Heart right ventricle (tissue), 16 donors: ENCODE measurements at regions of chr4 and their contacts with region 1.

Region 1: DNA sequence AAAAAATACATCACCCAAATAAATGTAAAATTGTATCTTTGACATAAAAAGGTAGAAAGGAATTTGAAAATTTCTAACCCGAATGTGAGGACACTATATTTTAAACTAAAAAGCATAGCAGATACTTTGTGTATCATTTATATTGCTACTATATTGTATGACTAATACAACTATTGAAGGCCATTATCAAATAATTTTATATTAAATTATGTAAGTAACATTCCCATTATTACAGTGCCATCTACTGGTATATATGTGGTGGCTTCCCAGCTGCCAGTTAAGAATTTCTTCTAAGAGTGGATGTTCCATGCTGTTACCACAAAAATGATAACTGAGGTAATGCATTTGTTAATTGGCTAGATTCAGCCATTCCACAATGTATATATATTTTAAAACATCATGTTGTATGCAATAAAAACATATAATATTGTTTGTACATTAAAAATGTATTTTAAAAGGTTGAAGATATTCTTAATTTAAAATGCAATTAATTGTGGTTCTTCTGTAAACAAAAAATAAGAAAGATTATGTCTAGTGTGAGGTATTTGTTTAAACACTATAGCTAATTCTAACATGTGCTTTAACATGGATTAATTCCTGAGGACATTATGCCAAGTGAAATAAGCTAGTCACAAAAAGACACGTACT is 65.3 kb downstream of the EGF start:
- DNase-seq: no peak
- ATAC-seq: no peak
- H3K4me3 ChIP-seq: no peak overlapping the region
- H3K27ac ChIP-seq: no peak overlapping the region
- H3K4me1 ChIP-seq: peaks cover 0 to 8% (median 0%) of the 10 kb centered on the region in 9 donors
- H3K27me3 ChIP-seq: peaks cover 0 to 4% (median 0%) of the 10 kb centered on the region in 7 donors
- CTCF ChIP-seq: peak; percentile 29 to 81 (median 72)

Region 2: GRCh38 chr4:108650212-108651013 is 1327.6 kb before region 1 on chr4 and contains the start of gene OSTC:
- intact Hi-C with region 1: loop called in 1 of 10 experiments (anchors 10 kb)
- DNase-seq: peak; percentile 94 to 97
- ATAC-seq: peak; percentile 96 to 99 (median 98)
- H3K4me3 ChIP-seq: peak within 1 kb of the TSS; percentile 67 to 94 (median 79)
- H3K27ac ChIP-seq: peak within 1 kb of the TSS; percentile 51 to 93 (median 86)
- H3K4me1 ChIP-seq: peaks cover 0 to 31% (median 19%) of the 10 kb centered on the region in 9 donors
- H3K27me3 ChIP-seq: no peaks in the 10 kb centered on the region
- CTCF ChIP-seq: peak in 5 of 9 donors; percentile 35 to 60 (median 46)
- total RNA-seq, gene OSTC: 21.8 to 47.7 (median 25.8) TPM

Region 3: DNA sequence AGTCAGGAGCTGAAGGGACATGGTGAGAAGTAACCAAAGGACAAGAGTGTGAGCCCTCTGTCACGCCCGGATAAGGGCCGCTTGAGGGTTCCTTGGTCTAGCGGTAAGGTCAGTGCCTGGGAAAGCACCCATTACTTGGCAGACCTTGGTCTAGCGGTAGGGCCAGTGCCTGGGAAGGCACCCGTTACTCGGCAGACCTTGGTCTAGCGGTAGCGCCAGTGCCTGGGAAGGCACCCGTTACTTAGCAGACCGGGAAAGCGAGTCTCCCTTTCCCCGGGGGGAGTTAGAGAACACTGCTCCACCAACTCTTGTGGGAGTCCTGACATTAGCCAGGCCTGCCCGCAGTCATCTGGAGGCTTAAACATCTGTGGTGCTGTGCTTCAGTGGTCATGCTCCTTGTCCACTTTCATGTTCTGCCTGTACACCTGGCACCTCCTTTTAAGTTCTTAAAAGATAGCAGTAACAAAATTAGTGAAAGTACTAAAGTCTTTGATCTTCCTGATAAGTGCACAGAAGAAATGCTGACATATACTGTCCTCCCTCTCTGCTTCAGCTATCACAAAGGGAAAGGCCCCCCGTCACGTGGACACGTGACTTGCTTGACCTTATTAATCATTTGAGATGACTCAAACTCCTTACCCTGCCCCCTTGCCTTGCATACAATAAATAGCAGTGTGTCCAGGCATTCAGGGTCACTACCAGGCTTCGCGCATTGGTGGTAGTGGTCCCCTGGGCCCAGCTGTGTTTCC is 553.7 kb before region 1 on chr4:
- intact Hi-C with region 1: loop called (anchors 1 to 10 kb)
- DNase-seq: no peak
- ATAC-seq: no peak
- H3K4me3 ChIP-seq: no peak overlapping the region
- H3K27ac ChIP-seq: no peak overlapping the region
- H3K4me1 ChIP-seq: peaks cover 0 to 7% (median 0%) of the 10 kb centered on the region in 9 donors
- H3K27me3 ChIP-seq: no peaks in the 10 kb centered on the region
- CTCF ChIP-seq: no peak

Region 4: GRCh38 chr4:109702950-109703663 is 274.9 kb before region 1 on chr4 and contains the start of gene CASP6:
- intact Hi-C with region 1: loop called in 1 of 10 experiments (anchors 10 kb)
- DNase-seq: peak; percentile 85 to 89
- ATAC-seq: peak; percentile 93 to 98 (median 96)
- H3K4me3 ChIP-seq: peak within 1 kb of the TSS; percentile 64 to 96 (median 86)
- H3K27ac ChIP-seq: peak within 1 kb of the TSS; percentile 63 to 87 (median 81)
- H3K4me1 ChIP-seq: peaks cover 2 to 26% (median 15%) of the 10 kb centered on the region in 9 donors
- H3K27me3 ChIP-seq: no peaks in the 10 kb centered on the region
- CTCF ChIP-seq: peak; percentile 59 to 88 (median 78)
- total RNA-seq, gene CASP6: 3.0 to 10.2 (median 6.2) TPM

Region 5: DNA sequence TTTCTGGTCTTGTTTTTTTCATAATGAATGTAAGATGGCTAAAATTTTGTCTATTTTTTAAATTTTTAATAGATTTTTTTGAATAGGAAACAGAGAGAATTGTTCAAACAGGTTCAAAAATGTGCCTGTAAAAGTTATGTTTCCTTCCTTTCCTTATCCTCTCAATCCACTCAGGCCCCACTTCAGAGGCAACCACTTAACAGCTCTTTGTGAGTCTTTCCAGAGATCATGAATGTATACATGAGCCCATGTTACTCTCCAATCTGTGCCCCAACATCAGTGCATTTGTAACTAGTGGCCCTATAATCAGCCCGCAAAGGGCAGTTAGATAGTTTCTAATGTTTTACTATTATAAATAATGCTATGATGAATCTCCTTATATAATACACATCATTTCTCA is 190.2 kb before region 1 on chr4:
- intact Hi-C with region 1: no loop called
- DNase-seq: no peak
- ATAC-seq: no peak
- H3K4me3 ChIP-seq: no peak overlapping the region
- H3K27ac ChIP-seq: no peak overlapping the region
- H3K4me1 ChIP-seq: no peaks in the 10 kb centered on the region
- H3K27me3 ChIP-seq: no peaks in the 10 kb centered on the region
- CTCF ChIP-seq: no peak

Region 6: GRCh38 chr4:109815151-109816081 is 162.6 kb before region 1 on chr4 and contains the start of gene GAR1:
- intact Hi-C with region 1: loop called in 1 of 10 experiments (anchors 10 kb)
- DNase-seq: peak; percentile 84 to 90
- ATAC-seq: peak; percentile 98 to 100 (median 100)
- H3K4me3 ChIP-seq: peak within 1 kb of the TSS; percentile 65 to 94 (median 78)
- H3K27ac ChIP-seq: peak within 1 kb of the TSS in 9 of 10 donors; percentile 69 to 90 (median 85)
- H3K4me1 ChIP-seq: peaks cover 0 to 25% (median 17%) of the 10 kb centered on the region in 9 donors
- H3K27me3 ChIP-seq: no peaks in the 10 kb centered on the region
- CTCF ChIP-seq: peak in 1 of 9 donors; percentile 21
- total RNA-seq, gene GAR1: 6.8 to 12.3 (median 9.2) TPM

Region 7: DNA sequence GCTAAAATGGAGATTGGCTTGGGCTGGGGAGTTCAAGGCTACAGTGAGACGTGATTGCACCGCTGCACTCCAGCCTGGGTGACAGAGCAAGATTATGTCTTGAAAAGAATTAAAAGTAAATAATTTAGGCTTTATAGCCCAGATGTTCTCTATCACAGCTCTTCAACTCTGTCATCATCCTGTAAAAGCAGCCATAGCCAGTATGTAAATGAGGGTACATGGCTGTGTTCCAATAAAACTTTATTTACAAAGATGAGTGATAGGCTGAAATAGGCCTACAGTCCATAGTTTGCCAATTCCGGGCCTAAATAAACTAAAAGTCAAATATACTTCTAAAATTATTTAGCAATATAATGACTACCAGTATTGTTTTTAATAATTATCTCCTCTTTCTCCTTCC is 141.0 kb before region 1 on chr4:
- intact Hi-C with region 1: loop called in 1 of 10 experiments (anchors 10 kb)
- DNase-seq: no peak
- ATAC-seq: no peak
- H3K4me3 ChIP-seq: no peak overlapping the region
- H3K27ac ChIP-seq: no peak overlapping the region
- H3K4me1 ChIP-seq: no peaks in the 10 kb centered on the region
- H3K27me3 ChIP-seq: no peaks in the 10 kb centered on the region
- CTCF ChIP-seq: no peak

Region 8: GRCh38 chr4:111154934-111155333 is 1177.0 kb after region 1 on chr4:
- intact Hi-C with region 1: no loop called
- DNase-seq: no peak
- ATAC-seq: no peak
- H3K4me3 ChIP-seq: no peak overlapping the region
- H3K27ac ChIP-seq: no peak overlapping the region
- H3K4me1 ChIP-seq: no peaks in the 10 kb centered on the region
- H3K27me3 ChIP-seq: no peaks in the 10 kb centered on the region
- CTCF ChIP-seq: no peak